Head of caudate nucleus (tissue), 42 donors: ENCODE measurements at regions of chr7 and their contacts with region 1.

Region 1: GRCh38 chr7:140517546-140518369 is 38.5 kb upstream of the MKRN1 start:
- DNase-seq: peak; percentile 69 to 95 (median 90)

Region 2: DNA sequence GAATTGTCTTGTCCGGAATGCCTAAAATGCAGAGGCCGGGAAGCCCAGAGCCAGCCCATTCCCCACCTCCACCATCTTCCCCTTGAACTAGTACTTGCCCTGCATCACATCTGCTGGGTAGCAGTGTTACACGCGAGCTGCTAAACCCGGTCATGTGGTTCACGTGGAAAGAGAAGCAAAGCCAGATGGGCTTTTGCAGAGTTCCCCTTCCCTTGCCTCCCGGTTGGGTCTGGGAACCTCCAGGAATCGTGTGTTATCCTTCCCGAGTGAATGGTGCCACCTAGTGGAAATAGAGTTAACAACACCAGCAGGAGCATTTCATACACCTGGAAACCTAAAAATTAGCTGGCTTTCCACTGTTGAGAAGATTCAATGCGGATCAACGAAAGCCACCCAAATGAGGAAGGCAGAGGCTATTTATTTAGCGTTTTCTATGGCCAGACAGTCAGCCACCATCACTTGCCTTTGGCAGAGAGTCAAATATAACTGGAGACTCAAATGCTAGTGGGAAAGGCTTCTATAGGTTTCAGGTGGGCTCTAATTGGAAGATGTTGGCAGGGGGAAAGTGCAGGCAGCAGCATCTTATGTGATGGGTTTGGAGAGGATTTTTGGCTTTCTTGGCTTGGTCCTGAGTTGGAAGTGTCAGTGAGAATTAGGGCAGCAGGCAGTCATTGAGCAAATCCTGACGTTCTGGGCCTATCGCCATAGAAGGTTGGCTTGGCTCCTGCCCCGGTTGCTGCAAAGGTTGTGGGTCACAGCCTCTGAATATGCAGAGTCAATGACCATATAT is 135.8 kb after region 1 on chr7:
- intact Hi-C with region 1: loop called (anchors 2 kb)
- DNase-seq: peak in 36 of 42 donors; percentile 34 to 88 (median 66)